ENCODE measurements at regions of chr11 and their contacts with region 1.

Region 1: GRCh38 chr11:72112321-72113219 is at the start of gene ANAPC15:
- DNase-seq: peak; percentile 99
- ATAC-seq: peak; percentile 89
- H3K4me3 ChIP-seq: peak within 1 kb of the TSS; percentile 67 to 94 (median 78)
- H3K4me3 Mint-ChIP-seq: peak within 1 kb of the TSS; percentile 93
- H3K27ac ChIP-seq: peak within 1 kb of the TSS; percentile 95
- H3K27ac Mint-ChIP-seq: peak within 1 kb of the TSS; percentile 98
- H3K4me1 ChIP-seq: peaks cover 14 to 19% of the 10 kb centered on the region in 2 donors
- H3K4me1 Mint-ChIP-seq: peaks cover 20% of the 10 kb centered on the region
- H3K27me3 ChIP-seq: peaks cover 0 to 12% (median 0%) of the 10 kb centered on the region in 4 experiments
- H3K27me3 Mint-ChIP-seq: peaks cover 14% of the 10 kb centered on the region
- CTCF ChIP-seq: no peak
- total RNA-seq, gene ANAPC15: 27.1 and 29.2 TPM in 2 replicates

Region 2: GRCh38 chr11:71787098-71787823 is 325.3 kb before region 1 on chr11:
- CTCF ChIA-PET with region 1: no interaction called
- POLR2A ChIA-PET with region 1: no interaction called
- intact Hi-C with region 1: loop called (anchors 1 kb)
- DNase-seq: peak; percentile 97
- ATAC-seq: peak; percentile 93
- H3K4me3 ChIP-seq: peak overlapping the region; percentile 11 to 93 (median 76)
- H3K4me3 Mint-ChIP-seq: peak overlapping the region; percentile 92
- H3K27ac ChIP-seq: peak overlapping the region; percentile 93 to 95
- H3K27ac Mint-ChIP-seq: peak overlapping the region; percentile 98
- H3K4me1 ChIP-seq: peaks cover 0 to 10% of the 10 kb centered on the region in 2 donors
- H3K4me1 Mint-ChIP-seq: peaks cover 15% of the 10 kb centered on the region
- H3K27me3 ChIP-seq: no peaks in the 10 kb centered on the region
- H3K27me3 Mint-ChIP-seq: no peaks in the 10 kb centered on the region
- CTCF ChIP-seq: no peak

Region 3: GRCh38 chr11:72024069-72024754 is 88.4 kb before region 1 on chr11:
- CTCF ChIA-PET with region 1: interaction called, 10 read pairs
- POLR2A ChIA-PET with region 1: no interaction called
- intact Hi-C with region 1: loop called (anchors 1 kb)
- DNase-seq: no peak
- ATAC-seq: no peak
- H3K4me3 ChIP-seq: no peak overlapping the region
- H3K4me3 Mint-ChIP-seq: no peak overlapping the region
- H3K27ac ChIP-seq: no peak overlapping the region
- H3K27ac Mint-ChIP-seq: no peak overlapping the region
- H3K4me1 ChIP-seq: no peaks in the 10 kb centered on the region
- H3K4me1 Mint-ChIP-seq: peaks cover 26% of the 10 kb centered on the region
- H3K27me3 ChIP-seq: no peaks in the 10 kb centered on the region
- H3K27me3 Mint-ChIP-seq: no peaks in the 10 kb centered on the region
- CTCF ChIP-seq: no peak

Region 4: DNA sequence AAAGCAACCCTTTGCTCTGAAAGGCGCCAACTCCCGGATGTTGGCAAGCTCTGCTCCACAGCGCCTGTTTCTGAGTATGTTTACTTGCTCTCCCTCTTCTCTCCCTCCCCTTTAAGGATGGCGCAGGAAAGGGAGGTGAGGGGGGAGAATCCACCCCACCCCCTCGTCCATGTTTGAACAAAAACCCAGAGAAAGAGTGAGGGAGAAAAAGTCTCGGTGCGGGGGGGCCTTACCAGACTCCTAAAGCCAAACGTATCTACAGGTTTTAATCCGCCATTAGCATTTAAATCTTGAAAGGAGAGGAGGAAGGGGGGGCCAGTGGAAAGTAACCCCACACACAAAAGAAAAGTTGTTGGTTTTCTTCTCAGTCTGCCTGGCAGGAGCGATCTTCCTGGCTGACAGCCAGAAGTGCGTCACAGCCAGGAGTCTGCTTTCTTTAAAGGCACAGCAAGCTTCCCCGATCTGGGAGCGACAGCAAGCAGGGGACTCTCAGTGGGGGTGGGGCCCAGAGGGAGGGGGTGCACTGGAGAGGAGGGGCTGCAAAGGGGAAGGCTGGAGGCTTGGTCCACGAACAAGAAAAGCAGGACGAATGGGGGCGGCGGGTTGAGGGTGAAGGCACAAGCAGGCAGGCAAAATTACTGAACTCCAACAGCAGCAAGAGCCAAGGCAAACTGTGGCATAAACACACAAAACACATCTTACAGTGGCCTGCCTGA is 71.7 kb before region 1 on chr11:
- CTCF ChIA-PET with region 1: no interaction called
- POLR2A ChIA-PET with region 1: interaction called, 6 read pairs
- intact Hi-C with region 1: loop called (anchors 2 kb)
- DNase-seq: peak; percentile 73
- ATAC-seq: peak; percentile 50
- H3K4me3 ChIP-seq: peak overlapping the region; percentile 72 to 86 (median 83)
- H3K4me3 Mint-ChIP-seq: no peak overlapping the region
- H3K27ac ChIP-seq: peak overlapping the region; percentile 72 to 92
- H3K27ac Mint-ChIP-seq: no peak overlapping the region
- H3K4me1 ChIP-seq: peaks cover 45 to 54% of the 10 kb centered on the region in 2 donors
- H3K4me1 Mint-ChIP-seq: peaks cover 30% of the 10 kb centered on the region
- H3K27me3 ChIP-seq: no peaks in the 10 kb centered on the region
- H3K27me3 Mint-ChIP-seq: no peaks in the 10 kb centered on the region
- CTCF ChIP-seq: no peak

Region 5: GRCh38 chr11:72080256-72080974 is 32.2 kb before region 1 on chr11 and contains the starts of genes LRRC51 and NUMA1:
- CTCF ChIA-PET with region 1: interaction called, 4 read pairs
- POLR2A ChIA-PET with region 1: interaction called, 3 read pairs
- intact Hi-C with region 1: loop called (anchors 1 kb)
- DNase-seq: peak; percentile 100
- ATAC-seq: peak; percentile 90
- H3K4me3 ChIP-seq: peak within 1 kb of the TSS; percentile 61 to 84 (median 77)
- H3K4me3 Mint-ChIP-seq: peak within 1 kb of the TSS; percentile 87
- H3K27ac ChIP-seq: peak within 1 kb of the TSS; percentile 78 to 90
- H3K27ac Mint-ChIP-seq: peak within 1 kb of the TSS; percentile 87
- H3K4me1 ChIP-seq: peaks cover 15 to 23% of the 10 kb centered on the region in 2 donors
- H3K4me1 Mint-ChIP-seq: peaks cover 41% of the 10 kb centered on the region
- H3K27me3 ChIP-seq: no peaks in the 10 kb centered on the region
- H3K27me3 Mint-ChIP-seq: no peaks in the 10 kb centered on the region
- CTCF ChIP-seq: no peak
- total RNA-seq, gene LRRC51: 5.5 and 7.7 TPM in 2 replicates
- total RNA-seq, gene NUMA1: 297 and 300 TPM in 2 replicates

Region 6: DNA sequence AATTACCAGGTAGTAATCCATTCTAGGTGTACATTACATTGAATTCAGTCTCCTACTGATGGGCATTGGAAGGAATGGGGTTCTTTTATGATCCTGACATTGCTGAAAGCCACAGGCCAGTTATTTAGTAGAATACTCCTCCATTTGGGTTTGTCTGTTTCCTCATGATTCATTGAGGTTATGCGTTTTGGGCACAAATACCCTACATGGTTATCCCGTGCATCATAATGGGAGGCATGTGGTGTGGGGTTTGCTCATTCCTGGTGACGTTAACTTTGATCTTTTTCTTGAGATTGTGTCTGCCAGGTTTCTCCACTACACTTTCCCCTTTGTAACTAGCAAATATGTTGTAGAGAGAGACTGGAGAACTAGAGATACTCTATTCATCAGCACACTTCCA is 28.5 kb after region 1 on chr11:
- CTCF ChIA-PET with region 1: interaction called, 4 read pairs
- POLR2A ChIA-PET with region 1: no interaction called
- intact Hi-C with region 1: loop called (anchors 1 kb)
- DNase-seq: no peak
- ATAC-seq: no peak
- H3K4me3 ChIP-seq: no peak overlapping the region
- H3K4me3 Mint-ChIP-seq: no peak overlapping the region
- H3K27ac ChIP-seq: no peak overlapping the region
- H3K27ac Mint-ChIP-seq: no peak overlapping the region
- H3K4me1 ChIP-seq: no peaks in the 10 kb centered on the region
- H3K4me1 Mint-ChIP-seq: no peaks in the 10 kb centered on the region
- H3K27me3 ChIP-seq: peaks cover 0 to 3% (median 0%) of the 10 kb centered on the region in 4 experiments
- H3K27me3 Mint-ChIP-seq: peaks cover 19% of the 10 kb centered on the region
- CTCF ChIP-seq: no peak

Measured in B cell (primary cell).